Vagina (tissue), 2 donors: ENCODE measurements at regions of chr10 and their contacts with region 1.

Region 1: GRCh38 chr10:75530337-75530736 is 98.9 kb downstream of the LRMDA start:
- DNase-seq: no peak
- H3K4me3 ChIP-seq: no peak overlapping the region
- H3K27ac ChIP-seq: no peak overlapping the region
- H3K4me1 ChIP-seq: no peaks in the 10 kb centered on the region
- H3K27me3 ChIP-seq: no peaks in the 10 kb centered on the region
- CTCF ChIP-seq: no peak
- POLR2A ChIP-seq: no peak

Region 2: GRCh38 chr10:75651417-75651816 is 121.1 kb after region 1 on chr10:
- intact Hi-C with region 1: loop called (anchors 10 kb)
- DNase-seq: no peak
- H3K4me3 ChIP-seq: no peak overlapping the region
- H3K27ac ChIP-seq: no peak overlapping the region
- H3K4me1 ChIP-seq: peaks cover 22% of the 10 kb centered on the region
- H3K27me3 ChIP-seq: no peaks in the 10 kb centered on the region
- CTCF ChIP-seq: no peak
- POLR2A ChIP-seq: no peak

Region 3: DNA sequence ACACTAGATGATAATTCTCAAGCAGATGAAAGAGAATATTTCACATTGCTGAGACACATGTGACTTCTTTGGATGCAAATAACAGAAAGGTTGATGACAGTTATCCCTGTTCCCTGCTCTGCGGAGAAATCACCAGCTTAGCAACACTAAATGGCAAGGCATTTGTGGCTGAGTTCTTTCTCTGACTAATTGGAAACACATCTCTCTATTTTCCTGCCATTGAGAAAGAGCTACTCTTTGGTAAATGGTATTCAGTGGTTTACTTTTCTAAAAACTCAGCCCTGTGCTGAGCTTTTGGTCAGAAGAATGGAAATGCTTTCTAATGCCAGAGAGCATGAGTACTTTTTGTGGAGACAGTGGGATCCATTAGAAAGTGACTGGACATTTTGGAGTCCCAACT is 672.4 kb after region 1 on chr10:
- intact Hi-C with region 1: no loop called
- DNase-seq: no peak
- H3K4me3 ChIP-seq: no peak overlapping the region
- H3K27ac ChIP-seq: no peak overlapping the region
- H3K4me1 ChIP-seq: no peaks in the 10 kb centered on the region
- H3K27me3 ChIP-seq: no peaks in the 10 kb centered on the region
- CTCF ChIP-seq: no peak
- POLR2A ChIP-seq: no peak